K562 (cell line): ENCODE measurements at regions of chr10 and their contacts with region 1.

Region 1: GRCh38 chr10:79195091-79195923 is 126.5 kb downstream of the ZMIZ1 start:
- DNase-seq: peak; percentile 89 to 95 (median 92)
- ATAC-seq: peak; percentile 94
- H3K4me3 ChIP-seq: no peak overlapping the region
- H3K27ac ChIP-seq: no peak overlapping the region
- H3K4me1 ChIP-seq: peaks cover 17 to 33% of the 10 kb centered on the region in 2 experiments
- H3K27me3 ChIP-seq: no peaks in the 10 kb centered on the region
- CTCF ChIP-seq: peak; percentile 96 to 98 (median 97)
- EP300 ChIP-seq: peak; percentile 42; the same call in 1 of the 2 replicates
- POLR2A ChIP-seq: no peak
- RAD21 ChIP-seq: peak; percentile 99

Region 2: DNA sequence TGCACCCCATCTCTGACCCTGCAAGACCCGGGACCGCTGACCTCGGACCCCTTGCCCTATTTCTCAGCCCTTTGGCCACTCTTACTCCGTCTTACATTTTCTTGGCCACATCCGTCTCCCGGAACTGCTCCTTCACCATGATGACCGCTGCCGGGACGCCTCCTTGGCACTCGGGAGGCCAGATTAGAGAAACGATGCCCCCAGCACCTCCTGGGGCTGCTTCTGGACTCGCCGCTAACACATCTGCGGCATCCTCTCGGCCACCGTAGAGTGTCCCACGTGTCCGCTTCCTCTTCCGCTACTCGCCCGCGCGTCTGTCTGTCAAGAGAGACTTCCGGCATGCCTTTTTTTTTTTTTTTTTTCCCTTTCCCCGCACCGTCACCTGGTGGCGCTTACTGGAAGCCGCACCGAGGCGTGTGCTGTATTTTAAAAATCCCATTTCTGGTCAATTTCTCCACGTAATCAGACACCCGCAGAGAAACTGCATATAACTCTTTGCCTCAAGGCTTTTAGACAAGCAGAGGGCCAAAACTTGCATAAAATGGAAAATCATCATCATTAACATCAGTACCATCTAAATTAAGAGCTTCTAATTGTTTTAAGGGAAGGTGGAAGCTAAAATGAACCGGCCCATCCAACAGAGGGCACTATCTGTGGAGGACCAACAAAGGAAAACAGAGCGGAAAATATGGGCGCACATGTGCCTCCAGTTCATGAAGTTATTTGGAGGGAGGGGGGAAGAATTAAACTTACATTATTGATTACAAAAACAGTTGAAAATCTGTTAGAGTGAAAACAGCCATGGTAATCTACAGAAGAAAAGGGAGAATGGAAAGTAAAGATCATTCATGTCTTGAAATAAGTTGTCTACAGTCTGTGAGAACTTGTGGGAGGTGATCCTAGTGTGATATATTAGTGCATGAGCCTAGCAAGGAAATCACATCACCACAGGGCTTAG is 1165.8 kb before region 1 on chr10 and contains the start of gene POLR3A:
- CTCF ChIA-PET with region 1: no interaction called
- POLR2A ChIA-PET with region 1: interaction called, 3 read pairs
- in situ Hi-C with region 1: loop called (anchors 25 kb)
- intact Hi-C with region 1: no loop called
- DNase-seq: peak; percentile 95 to 99 (median 96)
- ATAC-seq: peak; percentile 82
- H3K4me3 ChIP-seq: peak within 1 kb of the TSS; percentile 89
- H3K27ac ChIP-seq: peak within 1 kb of the TSS; percentile 87
- H3K4me1 ChIP-seq: peaks cover 8% of the 10 kb centered on the region in 2 experiments; a peak in 3 of 5 replicates
- H3K27me3 ChIP-seq: no peaks in the 10 kb centered on the region
- CTCF ChIP-seq: peak; percentile 91 to 96 (median 93)
- EP300 ChIP-seq: no peak; the same call in 1 of the 2 replicates
- POLR2A ChIP-seq: peak; percentile 92
- RAD21 ChIP-seq: peak; percentile 38 to 46
- polyA plus RNA-seq, gene POLR3A: 14.9 to 28.8 TPM

Region 3: GRCh38 chr10:78302989-78303854 is 892.1 kb before region 1 on chr10:
- CTCF ChIA-PET with region 1: no interaction called
- POLR2A ChIA-PET with region 1: no interaction called
- in situ Hi-C with region 1: no loop called
- intact Hi-C with region 1: loop called (anchors 10 kb)
- DNase-seq: peak; percentile 95 to 100 (median 100)
- ATAC-seq: peak; percentile 97
- H3K4me3 ChIP-seq: peak overlapping the region; percentile 58
- H3K27ac ChIP-seq: peak overlapping the region; percentile 39; the same call in 2 of the 3 replicates
- H3K4me1 ChIP-seq: peaks cover 5 to 13% of the 10 kb centered on the region in 2 experiments; a peak in 4 of 5 replicates
- H3K27me3 ChIP-seq: peaks cover 6 to 26% of the 10 kb centered on the region in 2 experiments; a peak in 3 of 5 replicates
- CTCF ChIP-seq: peak; percentile 82 to 87 (median 85)
- EP300 ChIP-seq: no peak
- POLR2A ChIP-seq: peak; percentile 66
- RAD21 ChIP-seq: peak; percentile 52 to 53

Region 4: DNA sequence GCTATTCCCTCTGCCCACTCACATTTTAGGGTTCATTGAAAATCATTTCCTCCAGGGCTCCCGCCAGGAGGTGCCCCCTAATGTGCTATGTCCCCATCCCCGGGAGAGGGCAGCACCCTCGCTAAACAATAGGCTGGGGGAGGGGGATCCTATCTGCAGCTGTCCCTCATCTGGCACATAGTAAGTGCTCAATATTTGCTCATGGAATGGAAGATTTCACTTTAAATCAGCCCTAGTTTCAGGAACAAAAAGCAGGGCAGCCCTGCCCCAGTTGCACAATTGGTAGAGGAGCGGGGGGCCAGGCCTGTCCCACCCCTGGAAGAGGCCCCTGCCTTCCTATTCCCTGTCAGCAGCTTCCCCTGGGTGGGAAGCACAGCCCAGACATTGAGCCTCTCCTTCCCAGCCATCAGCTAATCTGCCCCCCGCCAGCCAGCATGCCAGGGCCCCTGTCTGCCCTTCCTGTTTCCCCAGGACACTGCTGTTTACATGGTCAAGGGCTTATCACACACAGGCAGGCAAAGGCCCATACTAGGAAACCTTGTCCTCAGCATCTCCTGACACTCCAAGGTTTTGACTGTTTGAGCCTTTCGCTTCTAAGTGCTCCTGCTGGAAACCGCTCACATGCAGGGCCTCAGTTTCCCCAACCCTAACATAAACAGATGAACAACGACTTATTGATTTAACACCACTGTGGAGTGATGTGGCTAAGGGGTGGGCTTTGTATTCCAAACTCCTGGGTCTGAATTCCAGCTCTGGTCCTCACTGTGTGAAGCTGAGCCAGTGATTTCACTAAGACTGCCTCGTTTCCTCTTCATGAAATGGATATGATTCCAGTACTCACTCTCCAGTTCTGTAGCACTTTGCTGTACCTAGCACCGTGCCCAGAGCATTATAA is 257.3 kb before region 1 on chr10:
- CTCF ChIA-PET with region 1: interaction called, 5 read pairs
- POLR2A ChIA-PET with region 1: interaction called, 4 read pairs
- in situ Hi-C with region 1: loop called (anchors 5 kb)
- intact Hi-C with region 1: loop called (anchors 1 kb)
- DNase-seq: peak; percentile 65 to 84 (median 81)
- ATAC-seq: peak; percentile 82
- H3K4me3 ChIP-seq: no peak overlapping the region
- H3K27ac ChIP-seq: no peak overlapping the region
- H3K4me1 ChIP-seq: peaks cover 5 to 17% of the 10 kb centered on the region in 2 experiments
- H3K27me3 ChIP-seq: peaks cover 20 to 37% of the 10 kb centered on the region in 2 experiments; a peak in 4 of 5 replicates
- CTCF ChIP-seq: peak; percentile 69 to 93 (median 84)
- EP300 ChIP-seq: peak; percentile 69
- POLR2A ChIP-seq: no peak
- RAD21 ChIP-seq: peak; percentile 48 to 70

Region 5: GRCh38 chr10:79084012-79084971 is 111.0 kb before region 1 on chr10:
- CTCF ChIA-PET with region 1: no interaction called
- POLR2A ChIA-PET with region 1: interaction called, 4 read pairs
- in situ Hi-C with region 1: loop called (anchors 25 kb)
- intact Hi-C with region 1: loop called (anchors 5 kb)
- DNase-seq: peak; percentile 74 to 92 (median 81)
- ATAC-seq: peak; percentile 77
- H3K4me3 ChIP-seq: no peak overlapping the region
- H3K27ac ChIP-seq: peak overlapping the region; percentile 18; the same call in 1 of the 3 replicates
- H3K4me1 ChIP-seq: peaks cover 73 to 74% of the 10 kb centered on the region in 2 experiments
- H3K27me3 ChIP-seq: no peaks in the 10 kb centered on the region
- CTCF ChIP-seq: no peak
- EP300 ChIP-seq: peak; percentile 78
- POLR2A ChIP-seq: no peak
- RAD21 ChIP-seq: peak; percentile 17 to 20; a peak in 2 of 4 replicates

Region 6: GRCh38 chr10:79149662-79150443 is 45.5 kb before region 1 on chr10:
- CTCF ChIA-PET with region 1: no interaction called
- POLR2A ChIA-PET with region 1: interaction called, 6 read pairs
- in situ Hi-C with region 1: no loop called
- intact Hi-C with region 1: loop called (anchors 1 kb)
- DNase-seq: peak; percentile 92 to 97 (median 94)
- ATAC-seq: peak; percentile 88
- H3K4me3 ChIP-seq: no peak overlapping the region; the same call in 1 of the 2 replicates
- H3K27ac ChIP-seq: peak overlapping the region; percentile 85
- H3K4me1 ChIP-seq: peaks cover 83 to 89% of the 10 kb centered on the region in 2 experiments
- H3K27me3 ChIP-seq: no peaks in the 10 kb centered on the region
- CTCF ChIP-seq: no peak
- EP300 ChIP-seq: peak; percentile 41; the same call in 1 of the 2 replicates
- POLR2A ChIP-seq: peak; percentile 71
- RAD21 ChIP-seq: no peak; a peak in 1 of 4 replicates

Region 7: GRCh38 chr10:79221110-79222051 is 26.1 kb after region 1 on chr10:
- CTCF ChIA-PET with region 1: no interaction called
- POLR2A ChIA-PET with region 1: no interaction called
- in situ Hi-C with region 1: no loop called
- intact Hi-C with region 1: no loop called
- DNase-seq: peak in 3 of 4 experiments; percentile 26 to 59 (median 53)
- ATAC-seq: peak; percentile 48
- H3K4me3 ChIP-seq: no peak overlapping the region
- H3K27ac ChIP-seq: no peak overlapping the region
- H3K4me1 ChIP-seq: peaks cover 0 to 18% of the 10 kb centered on the region in 2 experiments; a peak in 3 of 5 replicates
- H3K27me3 ChIP-seq: no peaks in the 10 kb centered on the region
- CTCF ChIP-seq: no peak
- EP300 ChIP-seq: no peak
- POLR2A ChIP-seq: no peak
- RAD21 ChIP-seq: no peak